ENCODE measurements at regions of chr3 and their contacts with region 1.

Region 1: DNA sequence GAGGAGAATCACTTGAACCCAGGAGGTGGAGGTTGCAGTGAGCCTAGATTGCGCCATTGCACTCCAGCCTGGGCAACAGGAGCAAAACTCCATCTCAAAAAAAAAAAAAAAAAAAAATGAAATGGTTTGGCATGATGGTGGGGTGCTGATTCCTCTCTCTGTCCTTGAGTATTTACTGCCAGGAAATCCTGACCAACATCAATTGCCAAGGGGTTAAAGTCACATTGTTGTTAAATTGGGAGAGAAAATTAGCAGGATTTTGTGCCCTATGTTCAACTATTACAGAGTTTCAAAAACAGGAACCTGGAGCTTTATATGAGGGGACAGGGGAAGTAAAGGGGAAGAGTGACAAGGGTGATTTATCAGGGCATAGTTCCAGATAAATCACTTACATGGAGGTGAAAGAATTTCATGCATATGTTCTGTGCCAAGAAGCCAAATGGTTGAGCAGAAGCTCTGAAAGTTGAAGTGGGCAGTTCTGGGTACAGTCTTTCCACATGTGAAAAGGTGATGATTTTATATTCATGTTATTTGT is 70.5 kb upstream of the TSEN2 start:
- DNase-seq: no peak
- H3K4me3 ChIP-seq: no peak overlapping the region
- H3K27ac ChIP-seq: no peak overlapping the region
- H3K4me1 ChIP-seq: no peaks in the 10 kb centered on the region
- H3K27me3 ChIP-seq: no peaks in the 10 kb centered on the region
- CTCF ChIP-seq: no peak
- EP300 ChIP-seq: no peak
- POLR2A ChIP-seq: no peak

Region 2: DNA sequence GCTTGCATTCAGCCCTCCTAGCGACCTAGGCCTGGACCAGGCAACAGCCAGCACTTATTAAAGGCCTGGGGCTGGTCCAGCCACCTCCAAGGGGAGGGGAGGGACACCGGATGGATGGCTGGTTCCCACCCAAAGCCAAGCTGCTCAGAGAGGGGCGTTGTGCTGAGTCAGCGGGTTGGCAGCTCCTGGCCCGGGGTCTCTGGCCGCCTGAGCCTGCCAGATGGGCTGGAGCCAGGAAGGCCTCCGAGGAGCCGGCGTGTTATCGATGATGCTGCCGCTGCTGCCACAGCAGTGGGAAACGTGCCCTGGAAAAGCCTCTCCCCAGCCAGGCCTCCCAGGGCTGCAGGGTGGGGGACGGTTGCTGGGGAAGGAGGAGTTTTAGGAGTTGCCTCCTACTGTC is 27.1 kb after region 1 on chr3:
- intact Hi-C with region 1: loop called in 1 of 4 experiments (anchors 2 kb)
- DNase-seq: peak; percentile 59 to 86 (median 80)
- H3K4me3 ChIP-seq: no peak overlapping the region
- H3K27ac ChIP-seq: no peak overlapping the region
- H3K4me1 ChIP-seq: peaks cover 4% of the 10 kb centered on the region
- H3K27me3 ChIP-seq: no peaks in the 10 kb centered on the region
- CTCF ChIP-seq: no peak
- EP300 ChIP-seq: no peak
- POLR2A ChIP-seq: no peak

Measured in ovary (tissue), 10 donors.